Brain microvascular endothelial cell (primary cell): ENCODE measurements at regions of chr1 and their contacts with region 1.

Region 1: DNA sequence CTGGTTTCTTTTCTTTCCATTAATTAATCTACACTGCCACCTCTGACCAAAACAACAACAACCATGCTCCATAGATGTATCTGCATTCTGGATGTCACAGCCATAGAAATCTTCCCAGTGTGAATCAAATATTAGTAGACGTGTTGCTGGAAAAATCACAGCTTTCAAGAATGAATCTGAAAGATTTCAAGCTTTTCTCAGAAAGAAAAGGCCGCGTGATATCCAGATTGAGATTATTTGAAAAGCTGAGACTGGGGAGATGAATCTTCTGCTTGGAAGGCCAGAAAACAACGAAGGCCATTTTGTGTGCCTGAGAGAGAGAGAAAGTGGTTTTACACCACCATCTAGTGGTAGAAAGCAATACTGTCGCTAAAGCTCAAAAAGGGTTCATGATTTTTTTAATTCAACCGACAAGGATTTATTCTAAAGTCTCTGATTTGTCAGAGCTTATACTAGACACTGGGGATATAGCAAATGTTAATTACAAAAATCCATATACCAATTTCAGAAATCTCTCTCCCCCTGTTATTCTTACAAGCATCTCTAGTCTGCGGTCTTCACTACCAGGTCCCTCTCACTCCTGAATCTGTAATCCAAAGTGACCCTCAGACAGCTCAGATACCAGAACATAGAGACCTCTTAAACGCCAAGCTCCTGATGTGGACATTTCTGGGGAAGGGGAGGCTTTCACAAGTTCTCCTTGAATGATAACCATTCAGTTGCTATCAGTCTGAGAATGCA is 87.5 kb upstream of the SGIP1 start:
- DNase-seq: peak; percentile 61
- H3K4me3 ChIP-seq: no peak overlapping the region
- H3K27ac ChIP-seq: no peak overlapping the region
- H3K27me3 ChIP-seq: no peaks in the 10 kb centered on the region
- CTCF ChIP-seq: peak; percentile 72

Region 2: DNA sequence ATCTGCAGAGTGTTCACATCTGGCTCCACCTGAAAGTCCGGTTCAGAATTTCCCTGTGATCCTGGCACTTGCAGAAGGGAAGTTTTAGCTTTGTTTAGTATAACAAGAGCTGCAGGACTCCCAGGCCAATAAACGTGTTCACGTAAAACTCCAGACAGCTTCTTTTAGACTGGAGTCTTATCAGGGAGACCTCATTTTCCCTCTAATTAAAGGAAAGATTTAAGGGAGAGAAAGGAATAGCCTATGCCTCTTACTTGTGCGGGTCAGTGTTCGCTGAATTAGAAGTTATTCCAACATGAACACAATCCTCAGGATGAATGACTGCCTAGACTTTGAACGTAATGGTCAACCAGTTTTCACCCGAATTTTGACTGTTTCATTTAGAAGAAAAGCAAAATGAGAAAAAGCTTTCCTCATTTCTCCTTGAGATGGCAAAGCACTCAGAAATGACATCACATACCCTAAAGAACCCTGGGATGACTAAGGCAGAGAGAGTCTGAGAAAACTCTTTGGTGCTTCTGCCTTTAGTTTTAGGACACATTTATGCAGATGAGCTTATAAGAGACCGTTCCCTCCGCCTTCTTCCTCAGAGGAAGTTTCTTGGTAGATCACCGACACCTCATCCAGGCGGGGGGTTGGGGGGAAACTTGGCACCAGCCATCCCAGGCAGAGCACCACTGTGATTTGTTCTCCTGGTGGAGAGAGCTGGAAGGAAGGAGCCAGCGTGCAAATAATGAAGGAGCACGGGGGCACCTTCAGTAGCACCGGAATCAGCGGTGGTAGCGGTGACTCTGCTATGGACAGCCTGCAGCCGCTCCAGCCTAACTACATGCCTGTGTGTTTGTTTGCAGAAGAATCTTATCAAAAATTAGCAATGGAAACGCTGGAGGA is 114.5 kb before region 1 on chr1:
- in situ Hi-C with region 1: loop called (anchors 25 kb)
- DNase-seq: peak; percentile 83
- H3K4me3 ChIP-seq: peak overlapping the region; percentile 59
- H3K27ac ChIP-seq: peak overlapping the region; percentile 97
- H3K27me3 ChIP-seq: no peaks in the 10 kb centered on the region
- CTCF ChIP-seq: peak; percentile 65

Region 3: GRCh38 chr1:66778266-66778665 is 331.8 kb after region 1 on chr1:
- in situ Hi-C with region 1: no loop called
- DNase-seq: no peak
- H3K4me3 ChIP-seq: no peak overlapping the region
- H3K27ac ChIP-seq: no peak overlapping the region
- H3K27me3 ChIP-seq: no peaks in the 10 kb centered on the region
- CTCF ChIP-seq: no peak